ENCODE measurements at regions of chr16 and their contacts with region 1.

Region 1: DNA sequence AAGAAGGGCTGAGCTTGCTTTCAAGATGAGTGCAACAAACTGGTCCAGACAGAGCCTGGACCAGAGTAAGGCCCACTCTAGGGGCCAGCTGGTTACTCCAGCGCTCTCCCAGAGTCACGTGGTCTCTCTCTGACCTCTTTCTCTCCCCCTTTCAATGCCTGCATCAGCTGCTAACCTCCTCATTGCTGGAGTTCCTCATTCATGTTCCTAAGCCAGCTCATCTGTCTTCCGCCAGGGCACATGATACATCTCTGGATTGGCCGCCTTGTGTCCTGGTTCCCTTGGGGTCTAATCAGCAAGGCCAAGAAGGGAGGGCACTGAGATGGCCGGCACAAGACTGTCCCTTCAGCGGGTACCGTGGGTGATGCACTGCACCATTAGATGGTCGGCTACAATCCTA is 26.9 kb upstream of the ZFP90 start:
- DNase-seq: peak in 1 of 4 donors; percentile 13
- ATAC-seq: no peak
- H3K4me3 ChIP-seq: no peak overlapping the region
- H3K27ac ChIP-seq: no peak overlapping the region
- H3K4me1 ChIP-seq: peaks cover 4 to 8% of the 10 kb centered on the region in 2 donors
- H3K27me3 ChIP-seq: peaks cover 0 to 9% of the 10 kb centered on the region in 2 donors
- CTCF ChIP-seq: no peak

Region 2: GRCh38 chr16:68251832-68252231 is 260.4 kb before region 1 on chr16:
- intact Hi-C with region 1: loop called in 1 of 2 experiments (anchors 5 kb)
- DNase-seq: no peak
- ATAC-seq: no peak
- H3K4me3 ChIP-seq: no peak overlapping the region
- H3K27ac ChIP-seq: no peak overlapping the region
- H3K4me1 ChIP-seq: peaks cover 0 to 18% of the 10 kb centered on the region in 2 donors
- H3K27me3 ChIP-seq: no peaks in the 10 kb centered on the region
- CTCF ChIP-seq: no peak

Region 3: DNA sequence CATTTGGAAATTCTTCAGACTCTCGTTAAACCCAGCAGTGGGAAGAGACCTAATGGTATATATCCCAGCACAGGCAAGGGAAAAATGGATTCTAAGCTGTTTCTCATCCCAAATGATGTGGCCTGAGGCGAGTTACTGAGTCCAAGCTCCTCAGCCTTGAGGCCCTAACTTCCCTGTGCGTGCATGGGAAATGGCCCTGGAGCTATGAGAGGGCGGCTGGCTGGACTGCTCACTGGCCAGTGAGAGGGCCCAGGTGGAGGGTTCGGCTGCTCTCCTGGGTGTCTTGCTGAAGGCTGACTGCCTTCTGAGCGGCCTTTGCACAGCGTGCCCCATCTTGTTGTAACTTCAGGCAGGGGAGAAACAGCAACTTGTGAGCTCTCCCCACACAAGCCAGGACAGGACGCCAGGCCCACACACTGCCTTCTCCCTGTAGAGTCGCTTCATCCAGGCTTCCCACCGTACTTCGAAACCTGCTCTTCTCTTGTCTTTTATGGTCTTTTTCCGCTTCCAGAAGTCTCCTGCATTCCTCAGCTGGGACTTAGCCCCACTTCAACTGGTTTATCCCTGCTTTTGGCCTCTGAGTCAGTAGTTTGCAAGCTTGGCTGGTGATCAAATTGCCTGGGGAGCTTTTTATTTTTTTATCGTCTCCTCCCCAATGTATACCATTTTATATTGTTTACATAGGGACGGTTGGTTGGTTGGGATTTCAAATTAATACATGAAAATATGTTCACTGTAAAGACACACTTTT is 146.2 kb after region 1 on chr16:
- intact Hi-C with region 1: no loop called
- DNase-seq: no peak
- ATAC-seq: peak; percentile 92
- H3K4me3 ChIP-seq: no peak overlapping the region
- H3K27ac ChIP-seq: peak overlapping the region in 1 of 2 donors; percentile 73
- H3K4me1 ChIP-seq: peaks cover 0 to 7% of the 10 kb centered on the region in 2 donors
- H3K27me3 ChIP-seq: peaks cover 0 to 22% of the 10 kb centered on the region in 2 donors
- CTCF ChIP-seq: no peak

Region 4: DNA sequence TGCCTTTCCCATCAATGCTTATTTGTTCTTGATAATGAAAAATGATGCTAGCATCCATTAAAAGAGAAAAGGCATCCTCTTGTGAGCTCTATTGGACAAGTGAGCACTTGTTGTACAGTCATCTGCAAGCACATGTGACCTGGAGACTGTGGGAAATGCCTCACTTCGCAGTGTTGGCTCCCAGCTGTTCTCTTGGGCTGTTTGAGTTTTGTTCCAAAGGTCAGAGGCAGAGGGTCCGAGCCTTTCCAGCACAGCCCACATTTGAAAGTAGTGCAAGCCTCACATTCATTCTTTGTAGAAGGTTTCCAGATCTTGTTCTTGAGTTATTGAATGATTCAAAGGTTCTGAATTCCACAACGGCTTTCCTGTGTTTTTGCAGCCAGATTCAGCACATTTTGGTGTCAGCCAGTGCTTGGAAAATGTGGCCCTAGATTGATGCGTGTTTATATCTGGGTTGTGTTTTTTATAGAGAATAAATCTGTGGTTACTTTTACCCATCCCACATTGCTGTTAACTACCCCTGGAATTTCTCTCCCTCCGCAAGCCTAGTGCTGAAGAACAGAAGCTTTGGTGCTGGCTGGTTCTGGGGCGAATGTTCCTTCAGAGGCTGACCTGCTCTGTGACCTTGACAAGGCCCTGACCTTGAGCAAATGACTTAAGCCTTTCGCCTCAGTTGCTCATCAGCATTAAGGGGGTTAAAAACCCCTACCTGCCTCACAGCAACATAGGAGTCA is 274.7 kb after region 1 on chr16:
- intact Hi-C with region 1: no loop called
- DNase-seq: no peak
- ATAC-seq: peak; percentile 13
- H3K4me3 ChIP-seq: no peak overlapping the region
- H3K27ac ChIP-seq: no peak overlapping the region
- H3K4me1 ChIP-seq: peaks cover 8 to 40% of the 10 kb centered on the region in 2 donors
- H3K27me3 ChIP-seq: no peaks in the 10 kb centered on the region
- CTCF ChIP-seq: no peak

Measured in left lung (tissue), 14 donors.